IMR-90 (cell line): ENCODE measurements at regions of chr17 and their contacts with region 1.

Region 1: GRCh38 chr17:42322382-42323267 is 34.3 kb downstream of the STAT5A start:
- DNase-seq: peak; percentile 94
- ATAC-seq: peak; percentile 87
- H3K4me3 ChIP-seq: no peak overlapping the region
- H3K27ac ChIP-seq: peak overlapping the region; percentile 73; the same call in 1 of the 2 replicates
- H3K4me1 ChIP-seq: peaks cover 13% of the 10 kb centered on the region
- H3K27me3 ChIP-seq: no peaks in the 10 kb centered on the region
- CTCF ChIP-seq: peak; percentile 100
- POLR2A ChIP-seq: peak; percentile 71
- RAD21 ChIP-seq: peak; percentile 99

Region 2: GRCh38 chr17:42399948-42400843 is 77.6 kb after region 1 on chr17:
- CTCF ChIA-PET with region 1: interaction called, 5 read pairs
- POLR2A ChIA-PET with region 1: interaction called, 7 read pairs
- dilution Hi-C with region 1: no loop called
- in situ Hi-C with region 1: loop called (anchors 5 kb)
- intact Hi-C with region 1: loop called (anchors 1 kb)
- DNase-seq: no peak
- ATAC-seq: no peak
- H3K4me3 ChIP-seq: no peak overlapping the region
- H3K27ac ChIP-seq: peak overlapping the region; percentile 2; the same call in 1 of the 2 replicates
- H3K4me1 ChIP-seq: peaks cover 19% of the 10 kb centered on the region
- H3K27me3 ChIP-seq: no peaks in the 10 kb centered on the region
- CTCF ChIP-seq: no peak
- POLR2A ChIP-seq: no peak
- RAD21 ChIP-seq: no peak

Region 3: GRCh38 chr17:42422958-42423712 is 100.5 kb after region 1 on chr17 and contains the start of gene CAVIN1:
- CTCF ChIA-PET with region 1: no interaction called
- POLR2A ChIA-PET with region 1: no interaction called
- dilution Hi-C with region 1: no loop called
- in situ Hi-C with region 1: no loop called
- intact Hi-C with region 1: loop called (anchors 5 kb)
- DNase-seq: peak; percentile 98
- ATAC-seq: peak; percentile 80
- H3K4me3 ChIP-seq: peak within 1 kb of the TSS; percentile 92
- H3K27ac ChIP-seq: peak within 1 kb of the TSS; percentile 97
- H3K4me1 ChIP-seq: peaks cover 23% of the 10 kb centered on the region
- H3K27me3 ChIP-seq: no peaks in the 10 kb centered on the region
- CTCF ChIP-seq: 0 out of 2 replicates have a peak, but pooled peaks have one; percentile 8
- POLR2A ChIP-seq: peak; percentile 99
- RAD21 ChIP-seq: no peak; the same call in none of the 2 replicates
- total RNA-seq, gene CAVIN1: 556 and 644 TPM in 2 replicates

Region 4: DNA sequence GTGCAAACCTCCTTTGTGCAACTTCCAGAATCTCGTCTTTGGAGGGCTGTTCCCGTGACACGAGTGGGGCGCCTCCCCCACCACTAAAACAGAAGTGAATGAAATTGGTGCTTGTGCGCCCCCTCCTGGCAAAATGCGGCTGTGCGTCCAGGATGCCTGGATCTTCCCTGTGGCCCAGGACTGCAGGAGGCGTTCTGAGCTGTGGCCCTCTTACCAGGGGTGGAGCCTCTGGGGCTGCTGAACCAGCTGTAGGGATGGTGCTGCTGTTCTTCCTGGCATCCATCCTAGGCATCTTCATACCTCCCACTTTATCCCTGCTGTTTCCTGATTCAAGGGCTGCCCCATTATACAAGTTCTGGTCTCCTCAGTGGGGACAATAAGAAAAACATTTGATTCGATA is 194.9 kb after region 1 on chr17:
- CTCF ChIA-PET with region 1: interaction called, 5 read pairs
- POLR2A ChIA-PET with region 1: no interaction called
- dilution Hi-C with region 1: no loop called
- in situ Hi-C with region 1: loop called (anchors 5 kb)
- intact Hi-C with region 1: loop called (anchors 2 kb)
- DNase-seq: peak; percentile 92
- ATAC-seq: peak; percentile 51
- H3K4me3 ChIP-seq: no peak overlapping the region
- H3K27ac ChIP-seq: peak overlapping the region; percentile 99
- H3K4me1 ChIP-seq: peaks cover 71% of the 10 kb centered on the region
- H3K27me3 ChIP-seq: no peaks in the 10 kb centered on the region
- CTCF ChIP-seq: peak; percentile 99
- POLR2A ChIP-seq: no peak
- RAD21 ChIP-seq: peak; percentile 90

Region 5: GRCh38 chr17:42566883-42567573 is 244.4 kb after region 1 on chr17 and contains the start of gene MLX:
- CTCF ChIA-PET with region 1: no interaction called
- POLR2A ChIA-PET with region 1: no interaction called
- dilution Hi-C with region 1: no loop called
- in situ Hi-C with region 1: no loop called
- intact Hi-C with region 1: loop called (anchors 1 kb)
- DNase-seq: peak; percentile 85
- ATAC-seq: peak; percentile 80
- H3K4me3 ChIP-seq: peak within 1 kb of the TSS; percentile 84
- H3K27ac ChIP-seq: peak within 1 kb of the TSS; percentile 95
- H3K4me1 ChIP-seq: peaks cover 16% of the 10 kb centered on the region
- H3K27me3 ChIP-seq: no peaks in the 10 kb centered on the region
- CTCF ChIP-seq: no peak
- POLR2A ChIP-seq: no peak
- RAD21 ChIP-seq: no peak
- total RNA-seq, gene MLX: 37.5 and 37.8 TPM in 2 replicates